ENCODE measurements at regions of chr4 and their contacts with region 1.

Region 1: DNA sequence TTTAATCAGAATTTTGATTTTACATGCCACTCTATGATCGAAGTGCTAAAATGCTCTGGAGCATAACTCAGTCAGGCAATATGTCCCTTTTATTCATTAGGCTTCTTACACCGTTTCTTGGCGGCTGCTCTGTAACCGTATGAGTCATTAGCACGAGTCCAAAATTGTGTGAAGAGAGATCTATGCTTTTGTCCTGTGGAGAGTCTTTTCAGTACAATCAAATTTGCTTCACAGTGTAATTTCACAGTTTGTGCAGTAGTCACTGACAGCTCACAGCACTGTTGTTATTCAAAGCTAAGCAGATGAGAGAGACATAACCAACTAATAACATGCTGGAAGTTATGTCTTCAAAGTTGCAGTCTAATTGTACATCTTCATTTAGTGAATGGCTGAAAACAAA is 167.8 kb downstream of the PCDH10 start:
- DNase-seq: peak; percentile 69
- H3K4me3 ChIP-seq: no peak overlapping the region
- H3K27ac ChIP-seq: no peak overlapping the region
- H3K4me1 ChIP-seq: peaks cover 13% of the 10 kb centered on the region
- H3K27me3 ChIP-seq: no peaks in the 10 kb centered on the region
- CTCF ChIP-seq: no peak

Region 2: DNA sequence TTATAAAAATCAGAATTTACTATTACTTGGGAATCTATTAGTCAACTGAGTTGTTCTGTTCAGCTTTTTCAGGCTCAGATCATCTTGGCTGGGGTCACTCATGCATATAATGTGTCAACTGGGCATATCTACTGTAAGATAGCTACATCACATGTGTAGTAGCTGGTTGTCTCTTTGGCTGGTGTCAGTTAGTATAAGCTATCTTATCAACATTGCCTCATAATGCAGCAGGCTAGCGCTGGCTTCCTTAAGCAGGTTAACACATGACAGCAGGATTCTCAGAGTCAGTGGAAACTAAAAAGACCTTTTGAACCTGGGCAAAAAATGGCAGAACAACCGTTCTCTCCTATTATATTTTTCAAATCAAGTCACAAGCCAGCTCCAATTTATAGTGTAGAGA is 546.1 kb before region 1 on chr4:
- CTCF ChIA-PET with region 1: no interaction called
- POLR2A ChIA-PET with region 1: no interaction called
- intact Hi-C with region 1: no loop called
- DNase-seq: no peak
- H3K4me3 ChIP-seq: no peak overlapping the region
- H3K27ac ChIP-seq: no peak overlapping the region
- H3K4me1 ChIP-seq: no peaks in the 10 kb centered on the region
- H3K27me3 ChIP-seq: no peaks in the 10 kb centered on the region
- CTCF ChIP-seq: no peak

Region 3: GRCh38 chr4:133154725-133155124 is 162.2 kb before region 1 on chr4:
- CTCF ChIA-PET with region 1: no interaction called
- POLR2A ChIA-PET with region 1: no interaction called
- intact Hi-C with region 1: loop called (anchors 5 kb)
- DNase-seq: peak; percentile 71
- H3K4me3 ChIP-seq: peak overlapping the region; percentile 63
- H3K27ac ChIP-seq: no peak overlapping the region
- H3K4me1 ChIP-seq: peaks cover 11% of the 10 kb centered on the region
- H3K27me3 ChIP-seq: no peaks in the 10 kb centered on the region
- CTCF ChIP-seq: peak; percentile 81

Region 4: DNA sequence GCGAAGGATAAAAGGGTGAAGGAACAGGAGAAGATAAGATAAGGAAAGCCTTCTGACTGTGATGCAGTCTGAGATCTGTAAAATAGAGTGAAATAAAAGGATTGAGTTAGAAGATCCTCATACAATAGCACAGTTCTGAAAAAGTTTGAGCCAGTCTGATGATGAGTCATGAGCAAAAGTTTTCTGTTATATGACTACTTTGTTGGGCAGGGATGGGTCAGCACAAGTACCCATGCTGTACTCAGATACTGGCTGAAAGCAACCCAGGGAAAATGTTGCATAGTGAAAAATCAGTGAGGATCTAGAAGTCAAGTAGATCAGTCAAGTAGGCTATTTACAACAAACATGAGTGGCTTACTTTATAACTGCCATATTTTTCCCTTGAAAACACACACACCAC is 85.7 kb after region 1 on chr4:
- CTCF ChIA-PET with region 1: no interaction called
- POLR2A ChIA-PET with region 1: no interaction called
- intact Hi-C with region 1: no loop called
- DNase-seq: no peak
- H3K4me3 ChIP-seq: no peak overlapping the region
- H3K27ac ChIP-seq: no peak overlapping the region
- H3K4me1 ChIP-seq: no peaks in the 10 kb centered on the region
- H3K27me3 ChIP-seq: no peaks in the 10 kb centered on the region
- CTCF ChIP-seq: no peak

Region 5: DNA sequence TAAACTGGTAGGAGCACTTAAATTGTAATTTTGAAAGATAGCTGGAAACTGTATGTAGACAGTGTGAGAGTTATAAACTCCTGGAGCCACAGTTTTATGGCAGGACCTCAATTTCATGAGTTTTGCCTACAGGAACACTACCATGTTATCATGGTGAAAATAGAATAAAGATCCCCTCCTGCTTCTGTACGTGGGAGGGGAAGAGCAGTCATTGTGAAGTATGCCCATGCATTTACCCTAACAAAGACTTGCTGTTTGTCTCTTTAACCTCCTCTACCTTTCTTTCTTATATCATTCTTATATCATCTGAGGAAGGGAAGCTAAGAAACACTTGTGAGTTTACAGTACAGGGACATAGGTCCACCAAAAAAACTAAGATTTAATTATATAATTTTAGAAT is 159.2 kb after region 1 on chr4:
- CTCF ChIA-PET with region 1: no interaction called
- POLR2A ChIA-PET with region 1: no interaction called
- intact Hi-C with region 1: loop called (anchors 5 kb)
- DNase-seq: no peak
- H3K4me3 ChIP-seq: no peak overlapping the region
- H3K27ac ChIP-seq: no peak overlapping the region
- H3K4me1 ChIP-seq: no peaks in the 10 kb centered on the region
- H3K27me3 ChIP-seq: no peaks in the 10 kb centered on the region
- CTCF ChIP-seq: no peak